Naive thymus-derived CD4-positive, alpha-beta T cell (primary cell): ENCODE measurements at regions of chr2 and their contacts with region 1.

Region 1: GRCh38 chr2:216404010-216404618 is 8.2 kb upstream of the SMARCAL1 start:
- DNase-seq: peak in 8 of 9 donors; percentile 17 to 57 (median 38)
- ATAC-seq: peak; percentile 80
- H3K4me3 ChIP-seq: no peak overlapping the region
- H3K4me3 Mint-ChIP-seq: no peak overlapping the region
- H3K27ac ChIP-seq: no peak overlapping the region
- H3K27ac Mint-ChIP-seq: no peak overlapping the region
- H3K4me1 ChIP-seq: no peaks in the 10 kb centered on the region
- H3K4me1 Mint-ChIP-seq: peaks cover 0 to 12% (median 2%) of the 10 kb centered on the region in 7 donors
- H3K27me3 ChIP-seq: no peaks in the 10 kb centered on the region
- H3K27me3 Mint-ChIP-seq: peaks cover 0 to 37% (median 3%) of the 10 kb centered on the region in 5 donors

Region 2: DNA sequence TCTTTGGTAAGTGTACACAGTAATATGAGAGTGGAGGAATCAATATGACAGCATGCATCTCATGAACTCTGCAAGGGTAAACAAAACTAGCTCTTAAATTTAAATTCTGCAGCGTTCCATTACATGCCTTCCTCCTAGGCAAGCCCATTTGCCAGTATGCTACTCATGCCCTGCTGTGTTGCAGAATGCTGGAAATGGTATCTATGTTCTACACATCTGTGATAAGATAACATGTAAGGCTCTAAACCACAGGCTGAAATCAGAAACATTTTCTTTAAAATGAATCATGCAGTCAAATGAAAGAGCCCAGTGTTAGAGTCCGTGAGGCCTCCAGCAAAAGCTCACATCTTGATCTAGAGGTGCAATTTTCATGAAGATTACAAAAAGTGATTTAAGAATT is 855.4 kb before region 1 on chr2:
- CTCF ChIA-PET with region 1: no interaction called
- POLR2A ChIA-PET with region 1: no interaction called
- intact Hi-C with region 1: no loop called
- DNase-seq: no peak
- ATAC-seq: no peak
- H3K4me3 ChIP-seq: no peak overlapping the region
- H3K4me3 Mint-ChIP-seq: no peak overlapping the region
- H3K27ac ChIP-seq: no peak overlapping the region
- H3K27ac Mint-ChIP-seq: no peak overlapping the region
- H3K4me1 ChIP-seq: no peaks in the 10 kb centered on the region
- H3K4me1 Mint-ChIP-seq: no peaks in the 10 kb centered on the region
- H3K27me3 ChIP-seq: no peaks in the 10 kb centered on the region
- H3K27me3 Mint-ChIP-seq: peaks cover 0 to 7% (median 0%) of the 10 kb centered on the region in 5 donors

Region 3: DNA sequence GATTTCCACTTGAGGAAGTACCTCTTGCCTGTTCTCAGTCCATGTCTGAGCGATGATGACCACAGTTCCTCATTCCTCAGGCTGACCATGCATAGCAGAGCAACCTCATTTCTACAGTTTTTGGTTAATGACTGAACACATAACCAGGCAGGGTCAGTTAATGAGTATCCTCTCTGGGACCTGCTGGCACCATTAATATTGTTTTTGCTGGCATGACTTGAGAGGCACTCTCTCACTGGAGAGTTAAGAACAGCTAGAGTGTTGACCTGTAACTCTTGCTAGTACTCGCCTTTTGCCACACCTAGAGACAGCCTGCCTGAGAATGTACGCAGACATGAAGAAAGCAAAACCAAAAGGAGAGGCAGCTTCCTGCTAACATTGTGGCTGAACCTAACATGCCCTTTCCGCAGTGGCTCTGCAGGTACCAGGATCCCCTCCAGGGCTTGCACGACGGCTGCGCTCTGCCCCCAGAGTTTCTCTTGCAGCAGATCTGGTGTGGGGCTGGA is 346.4 kb before region 1 on chr2:
- CTCF ChIA-PET with region 1: no interaction called
- POLR2A ChIA-PET with region 1: no interaction called
- intact Hi-C with region 1: loop called in 1 of 2 experiments (anchors 2 kb)
- DNase-seq: peak in 8 of 9 donors; percentile 48 to 76 (median 67)
- ATAC-seq: peak; percentile 96
- H3K4me3 ChIP-seq: peak overlapping the region; percentile 49
- H3K4me3 Mint-ChIP-seq: peak overlapping the region; percentile 63 to 87 (median 84)
- H3K27ac ChIP-seq: peak overlapping the region; percentile 83
- H3K27ac Mint-ChIP-seq: peak overlapping the region; percentile 94 to 100 (median 98)
- H3K4me1 ChIP-seq: peaks cover 16 to 22% of the 10 kb centered on the region in 2 donors
- H3K4me1 Mint-ChIP-seq: peaks cover 8 to 42% (median 37%) of the 10 kb centered on the region in 7 donors
- H3K27me3 ChIP-seq: no peaks in the 10 kb centered on the region
- H3K27me3 Mint-ChIP-seq: no peaks in the 10 kb centered on the region

Region 4: GRCh38 chr2:216151313-216152030 is 252.6 kb before region 1 on chr2:
- CTCF ChIA-PET with region 1: no interaction called
- POLR2A ChIA-PET with region 1: no interaction called
- intact Hi-C with region 1: loop called in 1 of 2 experiments (anchors 5 kb)
- DNase-seq: no peak
- ATAC-seq: no peak
- H3K4me3 ChIP-seq: no peak overlapping the region
- H3K4me3 Mint-ChIP-seq: no peak overlapping the region
- H3K27ac ChIP-seq: no peak overlapping the region
- H3K27ac Mint-ChIP-seq: peak overlapping the region in 7 of 9 donors; percentile 13 to 73 (median 43)
- H3K4me1 ChIP-seq: no peaks in the 10 kb centered on the region
- H3K4me1 Mint-ChIP-seq: peaks cover 21 to 70% (median 37%) of the 10 kb centered on the region in 7 donors
- H3K27me3 ChIP-seq: no peaks in the 10 kb centered on the region
- H3K27me3 Mint-ChIP-seq: no peaks in the 10 kb centered on the region

Region 5: GRCh38 chr2:216222650-216223352 is 181.3 kb before region 1 on chr2:
- CTCF ChIA-PET with region 1: interaction called, 25 read pairs
- POLR2A ChIA-PET with region 1: no interaction called
- intact Hi-C with region 1: loop called in 1 of 2 experiments (anchors 1 kb)
- DNase-seq: peak in 1 of 9 donors; percentile 19
- ATAC-seq: peak; percentile 41
- H3K4me3 ChIP-seq: no peak overlapping the region
- H3K4me3 Mint-ChIP-seq: peak overlapping the region in 1 of 10 donors; percentile 15
- H3K27ac ChIP-seq: no peak overlapping the region
- H3K27ac Mint-ChIP-seq: peak overlapping the region in 2 of 9 donors; percentile 36 to 80
- H3K4me1 ChIP-seq: peaks cover 0 to 8% of the 10 kb centered on the region in 2 donors
- H3K4me1 Mint-ChIP-seq: peaks cover 7 to 41% (median 22%) of the 10 kb centered on the region in 7 donors
- H3K27me3 ChIP-seq: no peaks in the 10 kb centered on the region
- H3K27me3 Mint-ChIP-seq: no peaks in the 10 kb centered on the region

Region 6: GRCh38 chr2:216328347-216328746 is 75.8 kb before region 1 on chr2:
- CTCF ChIA-PET with region 1: interaction called, 8 read pairs
- POLR2A ChIA-PET with region 1: no interaction called
- intact Hi-C with region 1: loop called (anchors 1 kb)
- DNase-seq: peak in 2 of 9 donors; percentile 12 to 14
- ATAC-seq: no peak
- H3K4me3 ChIP-seq: no peak overlapping the region
- H3K4me3 Mint-ChIP-seq: no peak overlapping the region
- H3K27ac ChIP-seq: no peak overlapping the region
- H3K27ac Mint-ChIP-seq: no peak overlapping the region
- H3K4me1 ChIP-seq: no peaks in the 10 kb centered on the region
- H3K4me1 Mint-ChIP-seq: peaks cover 0 to 5% (median 0%) of the 10 kb centered on the region in 7 donors
- H3K27me3 ChIP-seq: no peaks in the 10 kb centered on the region
- H3K27me3 Mint-ChIP-seq: peaks cover 0 to 16% (median 0%) of the 10 kb centered on the region in 5 donors

Region 7: DNA sequence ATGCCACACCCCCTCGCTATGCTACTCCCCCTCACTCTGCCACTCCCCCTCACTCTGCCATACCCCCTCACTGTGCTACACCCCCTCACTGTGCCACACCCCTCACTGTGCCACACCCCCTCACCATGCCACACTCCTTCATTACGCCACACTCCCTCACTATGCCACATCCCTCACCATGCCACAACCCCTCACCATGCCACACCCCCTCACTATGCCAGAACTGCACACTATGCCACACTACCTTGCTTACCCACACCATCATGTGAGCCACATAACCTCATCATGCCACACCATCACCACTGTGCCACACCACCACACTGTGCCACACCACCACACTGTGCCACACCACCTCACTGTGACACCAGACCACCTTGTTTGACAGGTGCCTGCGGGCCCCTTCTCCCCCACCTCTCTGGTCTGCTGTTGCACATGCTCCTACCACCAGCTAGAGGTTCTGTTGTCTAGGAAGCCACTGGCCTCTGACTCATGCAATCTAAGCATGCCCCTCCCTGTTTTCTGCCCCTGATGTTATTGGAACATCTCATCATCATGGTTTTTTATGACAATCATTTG is 53.8 kb before region 1 on chr2:
- CTCF ChIA-PET with region 1: interaction called, 7 read pairs
- POLR2A ChIA-PET with region 1: interaction called, 5 read pairs
- intact Hi-C with region 1: loop called (anchors 1 to 2 kb)
- DNase-seq: no peak
- ATAC-seq: peak; percentile 63
- H3K4me3 ChIP-seq: no peak overlapping the region
- H3K4me3 Mint-ChIP-seq: peak overlapping the region in 9 of 10 donors; percentile 14 to 55 (median 38)
- H3K27ac ChIP-seq: no peak overlapping the region
- H3K27ac Mint-ChIP-seq: peak overlapping the region; percentile 22 to 90 (median 76)
- H3K4me1 ChIP-seq: peaks cover 71 to 72% of the 10 kb centered on the region in 2 donors
- H3K4me1 Mint-ChIP-seq: peaks cover 67 to 93% (median 85%) of the 10 kb centered on the region in 7 donors
- H3K27me3 ChIP-seq: no peaks in the 10 kb centered on the region
- H3K27me3 Mint-ChIP-seq: no peaks in the 10 kb centered on the region

Region 8: GRCh38 chr2:216371756-216372702 is 32.1 kb before region 1 on chr2 and contains the start of gene MARCHF4:
- CTCF ChIA-PET with region 1: no interaction called
- POLR2A ChIA-PET with region 1: no interaction called
- intact Hi-C with region 1: no loop called
- DNase-seq: peak; percentile 50 to 81 (median 62)
- ATAC-seq: peak; percentile 92
- H3K4me3 ChIP-seq: no peak within 1 kb of the TSS
- H3K4me3 Mint-ChIP-seq: peak within 1 kb of the TSS; percentile 13 to 74 (median 58)
- H3K27ac ChIP-seq: no peak within 1 kb of the TSS
- H3K27ac Mint-ChIP-seq: peak within 1 kb of the TSS in 1 of 9 donors; percentile 32
- H3K4me1 ChIP-seq: peaks cover 0 to 7% of the 10 kb centered on the region in 2 donors
- H3K4me1 Mint-ChIP-seq: peaks cover 12 to 28% (median 17%) of the 10 kb centered on the region in 7 donors
- H3K27me3 ChIP-seq: peaks cover 4 to 8% of the 10 kb centered on the region in 2 donors
- H3K27me3 Mint-ChIP-seq: peaks cover 46 to 72% (median 54%) of the 10 kb centered on the region in 5 donors
- total RNA-seq, gene MARCHF4: not detected

Region 9: GRCh38 chr2:216388046-216388884 is 15.8 kb before region 1 on chr2:
- CTCF ChIA-PET with region 1: interaction called, 3 read pairs
- POLR2A ChIA-PET with region 1: no interaction called
- intact Hi-C with region 1: loop called in 1 of 2 experiments (anchors 1 kb)
- DNase-seq: peak in 6 of 9 donors; percentile 14 to 65 (median 48)
- ATAC-seq: peak; percentile 88
- H3K4me3 ChIP-seq: no peak overlapping the region
- H3K4me3 Mint-ChIP-seq: peak overlapping the region in 6 of 10 donors; percentile 23 to 75 (median 58)
- H3K27ac ChIP-seq: no peak overlapping the region
- H3K27ac Mint-ChIP-seq: peak overlapping the region in 8 of 9 donors; percentile 8 to 94 (median 63)
- H3K4me1 ChIP-seq: peaks cover 0 to 13% of the 10 kb centered on the region in 2 donors
- H3K4me1 Mint-ChIP-seq: peaks cover 12 to 19% (median 18%) of the 10 kb centered on the region in 7 donors
- H3K27me3 ChIP-seq: no peaks in the 10 kb centered on the region
- H3K27me3 Mint-ChIP-seq: peaks cover 0 to under 1% (median 0%) of the 10 kb centered on the region in 5 donors

Region 10: DNA sequence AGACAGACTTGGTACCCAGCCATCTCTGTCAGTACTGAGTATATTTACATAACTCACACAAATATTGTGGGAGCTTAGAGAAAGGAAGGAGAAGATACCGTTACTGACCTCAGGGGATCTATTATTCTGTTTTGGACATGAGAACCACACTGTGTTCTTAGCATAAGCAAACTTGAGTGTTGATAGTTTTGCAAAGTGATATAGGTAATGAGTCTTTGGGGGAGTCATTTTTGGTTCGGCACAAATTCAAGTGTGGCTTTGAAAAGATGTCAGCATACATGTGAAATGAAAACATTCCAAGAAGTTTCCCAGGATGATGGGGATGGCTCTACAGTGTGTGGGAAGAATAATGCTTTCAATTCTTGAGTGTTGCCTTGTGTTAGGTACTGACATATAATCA is 32.3 kb after region 1 on chr2:
- CTCF ChIA-PET with region 1: no interaction called
- POLR2A ChIA-PET with region 1: no interaction called
- intact Hi-C with region 1: no loop called
- DNase-seq: no peak
- ATAC-seq: no peak
- H3K4me3 ChIP-seq: no peak overlapping the region
- H3K4me3 Mint-ChIP-seq: no peak overlapping the region
- H3K27ac ChIP-seq: no peak overlapping the region
- H3K27ac Mint-ChIP-seq: no peak overlapping the region
- H3K4me1 ChIP-seq: no peaks in the 10 kb centered on the region
- H3K4me1 Mint-ChIP-seq: no peaks in the 10 kb centered on the region
- H3K27me3 ChIP-seq: no peaks in the 10 kb centered on the region
- H3K27me3 Mint-ChIP-seq: no peaks in the 10 kb centered on the region